HCT116 (cell line): ENCODE measurements at regions of chr18 and their contacts with region 1.

Region 1: DNA sequence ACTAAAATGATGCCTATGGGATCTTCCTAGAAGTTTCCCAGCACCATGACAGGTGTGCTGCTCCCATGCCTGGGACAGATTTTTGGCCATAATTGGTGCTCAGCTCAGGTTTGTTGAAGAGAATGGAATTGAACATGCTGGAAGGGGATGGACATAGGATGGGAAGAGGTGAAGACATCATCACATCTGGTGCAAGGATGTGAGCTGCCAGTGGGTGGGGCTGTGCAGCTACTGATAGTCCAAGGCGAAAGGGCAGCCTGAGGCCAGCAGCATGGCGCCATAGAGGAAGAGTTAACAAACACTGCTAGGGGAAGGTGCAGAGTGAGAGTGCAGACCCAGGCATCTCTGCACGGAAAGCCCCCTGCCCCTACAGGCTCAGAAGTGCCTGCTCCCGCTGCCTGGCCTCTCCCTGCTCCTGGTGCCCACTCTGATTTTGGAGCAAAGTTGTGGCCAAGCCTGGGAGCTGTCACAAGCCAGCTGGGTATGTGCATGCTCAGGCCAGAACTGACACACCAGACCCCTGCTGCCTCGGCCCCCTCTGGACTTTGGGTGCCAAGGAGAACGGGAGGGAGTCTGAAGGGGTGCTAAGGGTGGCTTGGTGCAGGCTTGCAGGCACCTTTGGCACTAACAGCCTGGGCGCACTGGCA is 178.6 kb downstream of the ZBTB7C start:
- DNase-seq: peak; percentile 57
- ATAC-seq: peak; percentile 98
- H3K4me3 ChIP-seq: no peak overlapping the region
- H3K27ac ChIP-seq: no peak overlapping the region
- H3K4me1 ChIP-seq: peaks cover 0 to 5% of the 10 kb centered on the region in 2 experiments; a peak in 2 of 4 replicates
- H3K27me3 ChIP-seq: no peaks in the 10 kb centered on the region
- CTCF ChIP-seq: peak; percentile 77 to 80 (median 78)
- POLR2A ChIP-seq: no peak
- RAD21 ChIP-seq: peak; percentile 86

Region 2: DNA sequence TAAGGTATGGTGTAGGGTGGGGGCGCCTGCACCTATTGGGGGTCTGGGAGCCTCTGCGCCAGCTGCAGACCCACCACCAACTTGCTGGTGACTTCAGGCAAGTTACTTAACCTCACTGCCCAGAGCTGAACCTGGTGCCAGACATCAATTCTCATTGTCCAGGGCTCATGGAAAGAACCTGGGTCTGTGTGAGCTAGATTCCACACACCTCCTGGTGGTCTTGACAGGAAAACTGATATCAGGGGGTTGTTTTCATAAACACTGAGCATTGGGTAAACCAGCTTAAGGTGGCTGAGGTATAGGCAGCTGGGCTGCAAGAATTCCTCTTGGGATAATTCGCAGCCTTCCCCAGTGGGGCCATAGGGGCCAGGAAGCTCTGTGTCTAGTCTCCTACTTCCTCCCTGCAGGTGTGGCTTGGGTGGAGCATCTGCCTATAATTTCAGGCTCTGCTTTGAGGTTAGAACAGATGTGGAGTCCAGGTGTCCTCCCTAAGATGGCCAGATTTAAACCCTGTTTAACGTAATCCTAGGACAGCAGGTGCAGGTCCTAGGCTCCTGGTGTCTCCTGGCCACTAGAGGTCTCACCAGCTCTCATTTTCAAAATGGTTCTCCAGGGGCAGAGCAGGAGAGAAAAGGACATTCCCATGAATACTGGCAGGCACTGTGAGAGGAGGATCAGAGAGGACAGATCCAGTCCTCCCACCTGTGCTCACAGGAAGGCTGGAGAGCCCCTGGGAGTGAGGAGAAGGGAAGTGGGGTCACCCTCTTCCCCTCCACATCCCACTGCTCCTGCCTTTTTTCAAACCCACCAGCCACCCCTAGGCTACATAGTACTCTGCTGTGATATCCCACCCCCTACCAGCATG is 199.7 kb before region 1 on chr18:
- CTCF ChIA-PET with region 1: interaction called, 4 read pairs
- POLR2A ChIA-PET with region 1: no interaction called
- RAD21 ChIA-PET with region 1: interaction called in 1 of 2 experiments, 4 read pairs
- intact Hi-C with region 1: loop called (anchors 5 kb)
- DNase-seq: peak; percentile 51
- ATAC-seq: peak; percentile 94
- H3K4me3 ChIP-seq: no peak overlapping the region
- H3K27ac ChIP-seq: no peak overlapping the region
- H3K4me1 ChIP-seq: peaks cover 6 to 9% of the 10 kb centered on the region in 2 experiments; a peak in 2 of 4 replicates
- H3K27me3 ChIP-seq: no peaks in the 10 kb centered on the region
- CTCF ChIP-seq: peak; percentile 75 to 88 (median 84)
- POLR2A ChIP-seq: no peak
- RAD21 ChIP-seq: peak; percentile 82

Region 3: GRCh38 chr18:48345596-48345995 is 115.0 kb after region 1 on chr18:
- CTCF ChIA-PET with region 1: interaction called, 20 read pairs
- POLR2A ChIA-PET with region 1: no interaction called
- RAD21 ChIA-PET with region 1: no interaction called
- intact Hi-C with region 1: loop called (anchors 1 kb)
- DNase-seq: peak; percentile 12
- ATAC-seq: peak; percentile 75
- H3K4me3 ChIP-seq: no peak overlapping the region
- H3K27ac ChIP-seq: no peak overlapping the region
- H3K4me1 ChIP-seq: no peaks in the 10 kb centered on the region
- H3K27me3 ChIP-seq: no peaks in the 10 kb centered on the region
- CTCF ChIP-seq: peak; percentile 49 to 72 (median 56)
- POLR2A ChIP-seq: no peak
- RAD21 ChIP-seq: peak; percentile 77

Region 4: GRCh38 chr18:48410095-48410920 is 179.7 kb after region 1 on chr18:
- CTCF ChIA-PET with region 1: no interaction called
- POLR2A ChIA-PET with region 1: no interaction called
- RAD21 ChIA-PET with region 1: no interaction called
- intact Hi-C with region 1: loop called (anchors 10 kb)
- DNase-seq: peak; percentile 67
- ATAC-seq: peak; percentile 92
- H3K4me3 ChIP-seq: peak overlapping the region; percentile 57 to 68
- H3K27ac ChIP-seq: no peak overlapping the region
- H3K4me1 ChIP-seq: peaks cover 4 to 23% of the 10 kb centered on the region in 2 experiments; a peak in 3 of 4 replicates
- H3K27me3 ChIP-seq: peaks cover 11% of the 10 kb centered on the region; the same call in 1 of the 2 replicates
- CTCF ChIP-seq: peak in 1 of 3 experiments; percentile 26; a peak in 2 of 6 replicates
- POLR2A ChIP-seq: no peak
- RAD21 ChIP-seq: no peak

Region 5: DNA sequence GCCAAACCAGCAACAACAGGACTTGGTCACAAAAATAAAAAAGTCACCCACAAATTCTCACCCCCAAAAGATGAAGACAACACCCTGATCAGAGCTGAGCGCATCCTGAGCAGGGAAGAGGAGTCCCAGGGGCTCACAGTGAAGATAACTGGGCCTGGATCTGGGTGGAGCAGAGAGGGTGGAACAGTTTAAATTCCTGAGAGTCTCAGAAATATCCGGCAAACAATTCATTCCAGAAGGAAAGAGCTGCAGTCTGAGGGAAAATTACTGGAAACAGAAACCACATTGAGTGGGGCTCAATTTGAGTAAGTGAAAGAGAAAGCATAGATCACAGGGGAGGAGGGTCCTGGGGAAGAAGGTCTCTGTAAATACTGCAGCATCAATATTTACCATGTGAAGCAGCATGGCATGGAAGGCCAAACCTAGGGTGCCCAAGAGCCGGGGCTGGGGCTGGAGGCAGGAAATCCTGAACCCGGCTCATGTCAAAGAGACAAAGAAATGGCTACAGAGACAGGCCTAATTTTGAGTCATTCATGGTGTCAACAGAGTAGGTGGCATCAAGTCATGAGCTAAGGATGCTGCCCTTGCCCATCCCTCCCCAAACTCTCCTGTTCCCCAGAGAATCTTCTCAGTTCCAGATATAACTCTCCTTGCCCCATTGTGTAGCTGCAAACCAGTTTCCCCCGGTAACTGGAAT is 240.0 kb after region 1 on chr18:
- CTCF ChIA-PET with region 1: interaction called, 4 read pairs
- POLR2A ChIA-PET with region 1: no interaction called
- RAD21 ChIA-PET with region 1: no interaction called
- intact Hi-C with region 1: loop called (anchors 5 kb)
- DNase-seq: no peak
- ATAC-seq: no peak
- H3K4me3 ChIP-seq: no peak overlapping the region
- H3K27ac ChIP-seq: no peak overlapping the region
- H3K4me1 ChIP-seq: no peaks in the 10 kb centered on the region
- H3K27me3 ChIP-seq: 0 out of 2 replicates have a peak, but pooled peaks cover 1% of the 10 kb centered on the region
- CTCF ChIP-seq: no peak
- POLR2A ChIP-seq: no peak
- RAD21 ChIP-seq: no peak

Region 6: GRCh38 chr18:48663931-48664847 is 433.6 kb after region 1 on chr18:
- CTCF ChIA-PET with region 1: no interaction called
- POLR2A ChIA-PET with region 1: no interaction called
- RAD21 ChIA-PET with region 1: no interaction called
- intact Hi-C with region 1: loop called (anchors 10 kb)
- DNase-seq: no peak
- ATAC-seq: peak; percentile 72
- H3K4me3 ChIP-seq: no peak overlapping the region
- H3K27ac ChIP-seq: no peak overlapping the region
- H3K4me1 ChIP-seq: peaks cover 22 to 27% of the 10 kb centered on the region in 2 experiments
- H3K27me3 ChIP-seq: no peaks in the 10 kb centered on the region
- CTCF ChIP-seq: peak; percentile 64 to 89 (median 86); a peak in 5 of 6 replicates
- POLR2A ChIP-seq: no peak
- RAD21 ChIP-seq: peak; percentile 84